ENCODE measurements at regions of chr14 and their contacts with region 1.

Region 1: GRCh38 chr14:95527387-95528002 is 7.4 kb upstream of the GLRX5 start:
- DNase-seq: peak; percentile 72
- ATAC-seq: no peak
- H3K4me3 Mint-ChIP-seq: no peak overlapping the region
- H3K27ac Mint-ChIP-seq: peak overlapping the region; percentile 95
- H3K4me1 Mint-ChIP-seq: peaks cover 82% of the 10 kb centered on the region
- H3K27me3 Mint-ChIP-seq: no peaks in the 10 kb centered on the region

Region 2: GRCh38 chr14:95428557-95428956 is 98.9 kb before region 1 on chr14:
- CTCF ChIA-PET with region 1: interaction called, 18 read pairs
- DNase-seq: no peak
- ATAC-seq: no peak
- H3K4me3 Mint-ChIP-seq: no peak overlapping the region
- H3K27ac Mint-ChIP-seq: no peak overlapping the region
- H3K4me1 Mint-ChIP-seq: no peaks in the 10 kb centered on the region
- H3K27me3 Mint-ChIP-seq: no peaks in the 10 kb centered on the region

Region 3: GRCh38 chr14:95452176-95452892 is 75.2 kb before region 1 on chr14:
- CTCF ChIA-PET with region 1: interaction called, 130 read pairs
- DNase-seq: no peak
- ATAC-seq: no peak
- H3K4me3 Mint-ChIP-seq: no peak overlapping the region
- H3K27ac Mint-ChIP-seq: no peak overlapping the region
- H3K4me1 Mint-ChIP-seq: no peaks in the 10 kb centered on the region
- H3K27me3 Mint-ChIP-seq: no peaks in the 10 kb centered on the region

Region 4: GRCh38 chr14:95495538-95496025 is 31.9 kb before region 1 on chr14:
- CTCF ChIA-PET with region 1: interaction called, 11 read pairs
- DNase-seq: no peak
- ATAC-seq: peak; percentile 62
- H3K4me3 Mint-ChIP-seq: no peak overlapping the region
- H3K27ac Mint-ChIP-seq: peak overlapping the region; percentile 86
- H3K4me1 Mint-ChIP-seq: peaks cover 65% of the 10 kb centered on the region
- H3K27me3 Mint-ChIP-seq: no peaks in the 10 kb centered on the region

Region 5: GRCh38 chr14:95515596-95516552 is 11.6 kb before region 1 on chr14:
- CTCF ChIA-PET with region 1: interaction called, 35 read pairs
- DNase-seq: peak; percentile 90
- ATAC-seq: peak; percentile 83
- H3K4me3 Mint-ChIP-seq: peak overlapping the region; percentile 96
- H3K27ac Mint-ChIP-seq: peak overlapping the region; percentile 84
- H3K4me1 Mint-ChIP-seq: peaks cover 74% of the 10 kb centered on the region
- H3K27me3 Mint-ChIP-seq: no peaks in the 10 kb centered on the region

Measured in activated CD8-positive, alpha-beta memory T cell treated with anti-CD3 and anti-CD28 coated beads, Interleukin-2, amount 10 ng/mL, durations not matched to agents 7 days and 5 days (primary cell).